H1 (cell line): ENCODE measurements at regions of chr2 and their contacts with region 1.

Region 1: DNA sequence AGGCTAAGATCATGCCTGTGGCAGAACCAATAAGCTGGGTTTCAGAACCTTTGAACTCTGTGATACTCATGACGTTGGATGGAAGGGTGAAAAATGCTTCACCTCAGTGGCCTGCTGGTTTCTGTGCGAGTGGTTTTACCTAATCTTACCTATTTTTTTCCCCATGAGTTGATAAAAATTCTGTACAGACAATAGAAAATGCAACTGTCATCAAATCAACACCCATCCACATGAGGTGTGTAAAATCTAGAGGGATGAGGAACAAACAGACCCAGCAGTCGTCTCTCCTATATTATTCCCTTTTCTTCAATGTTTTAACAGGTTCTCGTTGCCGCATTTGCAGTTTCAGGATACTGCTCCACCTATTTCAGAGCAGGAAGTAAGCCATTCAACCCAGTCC is 67.3 kb downstream of the PRKRA start:
- DNase-seq: no peak
- H3K4me3 ChIP-seq: no peak overlapping the region
- H3K27ac ChIP-seq: no peak overlapping the region
- H3K4me1 ChIP-seq: 0 out of 7 replicates have a peak, but pooled peaks cover 0 to 3% (median 0%) of the 10 kb centered on the region in 4 experiments
- H3K27me3 ChIP-seq: no peaks in the 10 kb centered on the region
- CTCF ChIP-seq: no peak
- EP300 ChIP-seq: no peak
- POLR2A ChIP-seq: no peak
- RAD21 ChIP-seq: no peak

Region 2: DNA sequence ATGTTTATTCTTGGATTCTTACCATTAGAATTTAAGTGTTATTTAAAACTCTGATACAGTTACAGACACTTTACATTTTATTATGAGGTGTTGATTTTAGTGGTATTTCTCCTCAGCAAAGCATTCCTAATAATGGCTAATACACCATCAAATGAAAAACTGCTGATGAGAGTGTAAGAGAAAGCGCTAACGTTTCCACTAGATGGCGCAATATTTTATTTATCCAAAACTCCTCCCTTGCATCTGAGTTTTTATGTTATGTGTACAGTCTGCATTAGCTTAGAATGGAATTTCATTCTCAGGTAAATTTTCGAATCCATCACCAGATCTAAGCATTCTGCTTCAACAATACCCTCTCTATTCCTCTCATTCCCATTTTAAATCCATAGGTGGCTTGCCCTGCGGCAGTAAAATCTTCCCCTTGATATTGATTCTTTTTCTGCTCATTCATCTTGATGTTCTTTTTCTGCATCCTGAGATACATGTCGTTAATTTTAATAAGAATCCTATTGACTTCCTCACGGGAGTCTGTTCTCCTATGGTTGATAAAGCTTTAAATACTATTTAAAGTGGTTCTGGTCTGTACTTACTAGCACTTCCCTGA is 13.4 kb after region 1 on chr2:
- CTCF ChIA-PET with region 1: interaction called, 10 read pairs
- POLR2A ChIA-PET with region 1: interaction called, 3 read pairs
- DNase-seq: no peak
- H3K4me3 ChIP-seq: no peak overlapping the region
- H3K27ac ChIP-seq: no peak overlapping the region
- H3K4me1 ChIP-seq: no peaks in the 10 kb centered on the region
- H3K27me3 ChIP-seq: no peaks in the 10 kb centered on the region
- CTCF ChIP-seq: peak in 2 of 3 experiments; percentile 24 to 62; a peak in 2 of 4 replicates
- EP300 ChIP-seq: no peak
- POLR2A ChIP-seq: no peak
- RAD21 ChIP-seq: peak in 1 of 2 experiments; percentile 12; a peak in 3 of 4 replicates